ENCODE measurements at regions of chr11 and their contacts with region 1.

Region 1: GRCh38 chr11:87421422-87421821 is 383.7 kb downstream of the TMEM135 start:
- DNase-seq: peak; percentile 38
- H3K4me3 Mint-ChIP-seq: no peak overlapping the region
- H3K27ac Mint-ChIP-seq: no peak overlapping the region
- H3K4me1 Mint-ChIP-seq: no peaks in the 10 kb centered on the region
- H3K27me3 Mint-ChIP-seq: peaks cover 2% of the 10 kb centered on the region

Region 2: DNA sequence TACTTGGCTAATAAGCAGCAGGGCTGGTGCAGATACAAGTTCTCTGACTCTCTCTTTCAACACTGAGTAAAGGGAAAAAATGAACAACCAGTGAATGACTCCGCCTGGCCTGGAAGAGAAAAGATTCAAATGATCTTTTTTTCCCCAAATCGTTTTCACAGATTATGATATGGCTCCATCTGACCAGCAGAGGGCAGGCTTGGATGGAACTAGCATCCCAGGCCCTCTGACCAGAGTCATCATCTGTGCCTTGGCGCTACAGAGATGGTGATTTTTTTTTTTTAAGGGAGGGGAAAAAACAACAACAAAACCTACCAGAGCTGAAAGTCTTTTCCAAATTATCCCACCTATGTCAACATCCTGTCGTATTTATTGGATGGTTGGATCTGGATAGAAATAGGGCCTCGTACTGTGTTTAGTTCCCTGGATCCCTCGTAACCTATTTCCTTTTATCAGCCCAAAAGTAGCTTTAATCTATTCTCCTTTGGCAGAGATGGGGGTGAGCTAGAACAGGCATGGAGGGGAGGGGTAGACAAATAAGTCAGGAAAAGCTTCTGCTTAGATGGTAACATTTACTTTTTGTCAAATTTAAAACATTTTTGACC is 551.4 kb before region 1 on chr11:
- CTCF ChIA-PET with region 1: no interaction called
- intact Hi-C with region 1: loop called (anchors 1 kb)
- DNase-seq: peak; percentile 73
- H3K4me3 Mint-ChIP-seq: no peak overlapping the region
- H3K27ac Mint-ChIP-seq: no peak overlapping the region
- H3K4me1 Mint-ChIP-seq: no peaks in the 10 kb centered on the region
- H3K27me3 Mint-ChIP-seq: no peaks in the 10 kb centered on the region

Region 3: GRCh38 chr11:86938900-86939880 is 482.2 kb before region 1 on chr11:
- CTCF ChIA-PET with region 1: interaction called, 25 read pairs
- intact Hi-C with region 1: loop called (anchors 1 kb)
- DNase-seq: no peak
- H3K4me3 Mint-ChIP-seq: no peak overlapping the region
- H3K27ac Mint-ChIP-seq: no peak overlapping the region
- H3K4me1 Mint-ChIP-seq: no peaks in the 10 kb centered on the region
- H3K27me3 Mint-ChIP-seq: peaks cover 6% of the 10 kb centered on the region

Region 4: GRCh38 chr11:86990515-86990914 is 430.9 kb before region 1 on chr11:
- CTCF ChIA-PET with region 1: no interaction called
- intact Hi-C with region 1: no loop called
- DNase-seq: no peak
- H3K4me3 Mint-ChIP-seq: no peak overlapping the region
- H3K27ac Mint-ChIP-seq: no peak overlapping the region
- H3K4me1 Mint-ChIP-seq: no peaks in the 10 kb centered on the region
- H3K27me3 Mint-ChIP-seq: no peaks in the 10 kb centered on the region

Region 5: GRCh38 chr11:87352759-87353707 is 68.4 kb before region 1 on chr11:
- CTCF ChIA-PET with region 1: interaction called, 110 read pairs
- intact Hi-C with region 1: loop called (anchors 1 kb)
- DNase-seq: peak; percentile 89
- H3K4me3 Mint-ChIP-seq: no peak overlapping the region
- H3K27ac Mint-ChIP-seq: no peak overlapping the region
- H3K4me1 Mint-ChIP-seq: peaks cover 10% of the 10 kb centered on the region
- H3K27me3 Mint-ChIP-seq: peaks cover 6% of the 10 kb centered on the region

Region 6: DNA sequence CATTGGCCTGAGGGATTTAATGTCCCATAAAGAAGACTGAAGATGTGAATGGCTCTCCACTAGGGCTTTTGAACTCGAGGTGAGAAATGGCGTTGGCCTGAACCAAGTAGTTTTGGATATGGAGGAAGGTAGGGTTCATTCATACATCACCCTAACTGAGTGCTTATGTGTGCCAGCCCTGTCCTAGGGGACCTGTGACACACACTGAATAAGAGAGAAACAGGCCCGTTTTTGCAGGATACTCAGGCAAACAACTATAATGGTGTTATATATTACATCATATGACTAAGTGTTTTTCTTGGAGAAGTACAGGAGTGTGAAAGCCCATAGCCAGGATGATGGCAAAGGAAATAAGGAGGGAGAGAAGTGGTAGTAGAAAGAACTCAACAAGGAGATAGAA is 15.6 kb before region 1 on chr11:
- CTCF ChIA-PET with region 1: interaction called, 10 read pairs
- intact Hi-C with region 1: no loop called
- DNase-seq: no peak
- H3K4me3 Mint-ChIP-seq: no peak overlapping the region
- H3K27ac Mint-ChIP-seq: no peak overlapping the region
- H3K4me1 Mint-ChIP-seq: no peaks in the 10 kb centered on the region
- H3K27me3 Mint-ChIP-seq: peaks cover 4% of the 10 kb centered on the region

Region 7: GRCh38 chr11:87432022-87432421 is 10.6 kb after region 1 on chr11:
- CTCF ChIA-PET with region 1: interaction called, 11 read pairs
- intact Hi-C with region 1: no loop called
- DNase-seq: no peak
- H3K4me3 Mint-ChIP-seq: no peak overlapping the region
- H3K27ac Mint-ChIP-seq: no peak overlapping the region
- H3K4me1 Mint-ChIP-seq: no peaks in the 10 kb centered on the region
- H3K27me3 Mint-ChIP-seq: no peaks in the 10 kb centered on the region

Region 8: GRCh38 chr11:87572881-87573280 is 151.5 kb after region 1 on chr11:
- CTCF ChIA-PET with region 1: no interaction called
- intact Hi-C with region 1: no loop called
- DNase-seq: no peak
- H3K4me3 Mint-ChIP-seq: no peak overlapping the region
- H3K27ac Mint-ChIP-seq: no peak overlapping the region
- H3K4me1 Mint-ChIP-seq: no peaks in the 10 kb centered on the region
- H3K27me3 Mint-ChIP-seq: no peaks in the 10 kb centered on the region

Measured in activated naive CD4-positive, alpha-beta T cell treated with anti-CD3 and anti-CD28 coated beads for 36 hours (primary cell).